ENCODE measurements at regions of chr2 and their contacts with region 1.

Region 1: GRCh38 chr2:240143801-240144648 is 3.6 kb upstream of the OTOS start:
- DNase-seq: peak; percentile 92
- H3K4me3 ChIP-seq: peak overlapping the region in 1 of 2 experiments; percentile 14; a peak in 1 of 4 replicates
- H3K27ac ChIP-seq: no peak overlapping the region
- H3K4me1 ChIP-seq: peaks cover 0 to 12% of the 10 kb centered on the region in 2 experiments; a peak in 1 of 4 replicates
- H3K27me3 ChIP-seq: no peaks in the 10 kb centered on the region; the same call in 1 of the 2 replicates
- CTCF ChIP-seq: peak; percentile 84
- EP300 ChIP-seq: no peak
- RAD21 ChIP-seq: peak; percentile 92

Region 2: DNA sequence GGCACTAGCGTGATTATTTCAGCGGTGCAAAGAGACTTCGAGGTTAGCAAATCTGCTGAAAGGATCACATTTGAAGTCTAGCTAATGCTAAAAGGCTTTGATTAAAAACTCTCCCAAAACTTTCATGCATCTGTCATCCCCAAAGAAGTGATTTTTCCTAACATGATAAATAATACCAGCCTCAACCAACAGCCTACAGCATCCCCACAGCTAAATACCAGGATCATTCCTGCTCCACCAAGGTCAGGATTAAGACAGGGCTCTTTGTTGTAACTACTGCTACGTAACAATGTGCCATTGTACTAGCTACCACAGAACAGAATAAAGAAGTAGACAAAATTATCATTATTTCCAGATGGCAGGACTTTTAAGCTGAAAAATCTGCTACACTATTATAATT is 92.3 kb before region 1 on chr2:
- CTCF ChIA-PET with region 1: interaction called, 291 read pairs
- POLR2A ChIA-PET with region 1: no interaction called
- DNase-seq: no peak
- H3K4me3 ChIP-seq: no peak overlapping the region
- H3K27ac ChIP-seq: no peak overlapping the region
- H3K4me1 ChIP-seq: no peaks in the 10 kb centered on the region; a peak in 1 of 4 replicates
- H3K27me3 ChIP-seq: peaks cover 45% of the 10 kb centered on the region
- CTCF ChIP-seq: no peak
- EP300 ChIP-seq: no peak
- RAD21 ChIP-seq: no peak

Region 3: DNA sequence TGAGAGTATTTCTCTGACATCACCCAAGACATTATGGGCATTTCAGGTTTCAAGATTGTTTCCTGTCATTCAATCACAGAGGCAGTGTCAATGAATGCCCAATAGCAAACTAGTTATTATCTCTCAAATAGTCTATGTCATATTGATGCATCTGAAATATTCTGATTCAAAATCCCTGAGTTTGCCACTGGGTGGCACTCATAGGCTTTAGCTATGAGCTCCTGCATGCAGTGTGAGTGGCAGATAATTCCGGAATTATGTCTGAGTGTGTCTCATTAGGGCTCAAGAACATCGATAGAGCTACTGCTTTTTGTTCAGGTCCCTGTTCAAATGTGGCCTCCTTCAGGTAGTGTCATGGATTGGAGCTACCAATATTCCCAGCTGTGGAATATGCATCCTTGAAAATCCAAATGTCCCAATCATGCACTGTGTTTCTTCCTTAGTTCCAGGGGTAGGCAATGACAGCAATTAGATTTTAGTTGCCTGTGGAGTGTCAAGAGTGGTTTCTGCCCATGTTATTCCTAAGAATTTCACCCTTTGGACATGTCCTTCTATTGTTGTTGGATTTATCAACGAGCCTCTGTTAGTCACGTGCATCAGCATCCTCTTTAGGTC is 82.9 kb before region 1 on chr2:
- CTCF ChIA-PET with region 1: interaction called, 291 read pairs
- POLR2A ChIA-PET with region 1: no interaction called
- DNase-seq: peak; percentile 63
- H3K4me3 ChIP-seq: no peak overlapping the region; a peak in 1 of 4 replicates
- H3K27ac ChIP-seq: no peak overlapping the region
- H3K4me1 ChIP-seq: no peaks in the 10 kb centered on the region; a peak in 1 of 4 replicates
- H3K27me3 ChIP-seq: peaks cover 16% of the 10 kb centered on the region; the same call in 1 of the 2 replicates
- CTCF ChIP-seq: peak; percentile 71
- EP300 ChIP-seq: no peak
- RAD21 ChIP-seq: peak; percentile 83

Region 4: GRCh38 chr2:240069853-240070252 is 74.2 kb before region 1 on chr2:
- CTCF ChIA-PET with region 1: interaction called, 291 read pairs
- POLR2A ChIA-PET with region 1: no interaction called
- DNase-seq: no peak
- H3K4me3 ChIP-seq: no peak overlapping the region
- H3K27ac ChIP-seq: no peak overlapping the region
- H3K4me1 ChIP-seq: no peaks in the 10 kb centered on the region; a peak in 1 of 4 replicates
- H3K27me3 ChIP-seq: no peaks in the 10 kb centered on the region
- CTCF ChIP-seq: no peak
- EP300 ChIP-seq: no peak
- RAD21 ChIP-seq: no peak

Region 5: GRCh38 chr2:240089140-240089705 is 54.8 kb before region 1 on chr2:
- CTCF ChIA-PET with region 1: interaction called, 10 read pairs
- POLR2A ChIA-PET with region 1: no interaction called
- DNase-seq: no peak
- H3K4me3 ChIP-seq: no peak overlapping the region
- H3K27ac ChIP-seq: no peak overlapping the region
- H3K4me1 ChIP-seq: no peaks in the 10 kb centered on the region
- H3K27me3 ChIP-seq: no peaks in the 10 kb centered on the region; the same call in 1 of the 2 replicates
- CTCF ChIP-seq: no peak
- EP300 ChIP-seq: no peak
- RAD21 ChIP-seq: no peak

Region 6: DNA sequence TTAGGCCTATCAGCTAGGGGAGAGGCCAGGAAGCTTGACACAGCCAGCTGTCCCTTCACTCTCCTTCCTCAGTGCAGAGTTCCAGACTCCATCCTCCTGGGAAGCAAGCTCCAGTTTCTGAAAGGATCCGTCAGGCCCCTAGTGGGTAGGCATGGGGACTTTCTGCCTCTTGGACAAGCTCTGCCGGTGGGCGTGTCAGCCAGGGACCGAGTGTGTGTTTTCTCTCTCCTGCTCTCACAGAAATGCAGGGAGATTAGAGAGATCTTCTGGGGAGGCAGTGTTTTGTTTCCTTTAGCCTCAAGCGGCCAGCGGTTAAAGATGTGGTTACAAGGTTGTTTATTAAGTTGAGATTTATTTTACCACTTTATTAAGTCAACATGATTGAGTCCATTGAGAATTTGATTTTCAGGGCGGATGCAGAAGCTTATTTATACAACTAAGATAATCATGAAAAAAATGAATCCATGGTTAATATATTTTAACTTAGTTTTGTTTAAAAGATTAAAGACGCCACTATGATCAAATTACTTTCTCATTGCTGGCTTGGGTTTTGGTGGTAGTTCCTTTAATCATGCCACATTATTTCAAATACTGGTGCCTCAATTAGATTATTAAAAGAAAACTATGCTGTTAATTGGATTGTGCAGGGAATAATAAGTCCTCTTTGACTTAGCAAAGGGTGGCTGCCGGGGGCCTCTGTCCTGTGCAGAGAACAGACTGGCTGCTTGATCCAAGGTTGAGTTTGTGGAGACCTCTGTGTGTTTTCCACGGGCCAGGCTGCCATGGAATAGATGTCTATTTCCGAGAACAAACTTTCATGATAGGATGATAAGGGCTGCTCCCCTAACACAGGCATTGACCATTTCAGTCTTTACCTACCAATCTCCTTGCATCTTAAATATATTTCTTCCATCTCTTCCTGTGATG is 26.6 kb after region 1 on chr2:
- CTCF ChIA-PET with region 1: interaction called, 12 read pairs
- POLR2A ChIA-PET with region 1: no interaction called
- DNase-seq: no peak
- H3K4me3 ChIP-seq: no peak overlapping the region
- H3K27ac ChIP-seq: no peak overlapping the region
- H3K4me1 ChIP-seq: no peaks in the 10 kb centered on the region; a peak in 1 of 4 replicates
- H3K27me3 ChIP-seq: no peaks in the 10 kb centered on the region
- CTCF ChIP-seq: no peak
- EP300 ChIP-seq: no peak
- RAD21 ChIP-seq: no peak

Region 7: GRCh38 chr2:240434728-240435456 is 290.9 kb after region 1 on chr2:
- CTCF ChIA-PET with region 1: interaction called, 35 read pairs
- POLR2A ChIA-PET with region 1: interaction called, 3 read pairs
- DNase-seq: peak; percentile 99
- H3K4me3 ChIP-seq: peak overlapping the region; percentile 67 to 92
- H3K27ac ChIP-seq: peak overlapping the region; percentile 66 to 72
- H3K4me1 ChIP-seq: peaks cover 14 to 17% of the 10 kb centered on the region in 2 experiments; a peak in 2 of 4 replicates
- H3K27me3 ChIP-seq: no peaks in the 10 kb centered on the region
- CTCF ChIP-seq: no peak
- EP300 ChIP-seq: peak in 1 of 2 experiments; percentile 5; a peak in 1 of 4 replicates
- RAD21 ChIP-seq: no peak

Measured in SK-N-SH (cell line).